Left cardiac atrium (tissue), 4 donors: ENCODE measurements at regions of chr10 and their contacts with region 1.

Region 1: GRCh38 chr10:55263327-55263726 is 462.3 kb upstream of the PCDH15 start:
- DNase-seq: no peak
- ATAC-seq: no peak

Region 2: GRCh38 chr10:53601260-53601875 is 1662.0 kb before region 1 on chr10:
- intact Hi-C with region 1: loop called in 1 of 2 experiments (anchors 10 kb)
- DNase-seq: no peak
- ATAC-seq: no peak